A549 (cell line): ENCODE measurements at regions of chr1 and their contacts with region 1.

Region 1: DNA sequence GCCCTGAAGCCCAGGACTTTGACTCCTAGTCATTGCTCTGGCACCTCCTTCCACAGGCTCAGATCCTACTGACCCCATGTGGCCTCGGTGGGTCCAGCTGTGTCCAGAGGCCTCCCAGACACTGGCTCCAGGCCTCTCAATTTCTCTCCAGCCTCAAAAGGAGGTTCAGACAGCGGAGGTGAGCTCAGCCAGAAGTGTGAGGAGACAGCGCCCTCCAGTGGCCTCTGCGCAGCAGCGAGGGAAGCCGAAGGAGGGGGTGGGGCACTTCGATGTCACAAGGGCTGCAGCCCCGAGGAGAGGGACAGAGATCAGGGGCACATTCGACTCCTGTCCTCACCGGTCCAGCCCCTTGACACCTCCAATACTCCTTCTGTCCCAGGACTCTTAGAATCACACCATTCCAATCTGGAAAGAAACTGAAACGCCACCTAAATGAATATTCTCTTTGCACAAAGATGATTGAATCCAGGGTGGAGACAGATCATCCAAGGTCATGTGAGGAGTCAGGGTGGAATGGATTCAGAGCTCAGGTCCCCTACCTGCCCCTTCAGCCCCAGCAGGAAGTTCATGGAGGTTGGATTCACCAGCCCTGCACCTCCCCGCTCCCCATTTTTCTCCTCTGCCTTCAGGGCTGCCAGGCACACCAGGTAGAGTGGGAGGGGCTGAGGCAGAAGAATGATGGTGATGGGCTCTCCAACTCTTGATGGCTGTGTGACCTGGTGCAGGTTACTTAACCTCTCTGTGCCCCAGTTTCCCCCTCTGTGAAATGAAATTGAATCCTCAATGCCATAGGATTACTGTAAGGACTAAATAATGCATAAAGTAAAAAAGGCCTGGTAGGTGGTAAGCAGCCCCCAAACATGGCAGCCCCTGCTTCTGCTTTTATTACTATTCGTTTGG is 34.8 kb upstream of the ZBTB40 start:
- DNase-seq: peak; percentile 69 to 74
- ATAC-seq: peak; percentile 66 to 74; a peak in 5 of 6 replicates
- H3K4me3 ChIP-seq: no peak overlapping the region
- H3K27ac ChIP-seq: no peak overlapping the region
- H3K4me1 ChIP-seq: peaks cover 34% of the 10 kb centered on the region
- CTCF ChIP-seq: peak; percentile 83
- EP300 ChIP-seq: no peak
- POLR2A ChIP-seq: no peak
- RAD21 ChIP-seq: peak; percentile 94 to 95

Region 2: GRCh38 chr1:22098752-22099151 is 318.1 kb before region 1 on chr1:
- CTCF ChIA-PET with region 1: interaction called, 11 read pairs
- POLR2A ChIA-PET with region 1: no interaction called
- DNase-seq: no peak
- ATAC-seq: no peak
- H3K4me3 ChIP-seq: no peak overlapping the region
- H3K27ac ChIP-seq: no peak overlapping the region
- H3K4me1 ChIP-seq: no peaks in the 10 kb centered on the region
- CTCF ChIP-seq: no peak
- EP300 ChIP-seq: no peak
- POLR2A ChIP-seq: no peak
- RAD21 ChIP-seq: no peak

Region 3: GRCh38 chr1:22114083-22115012 is 302.5 kb before region 1 on chr1:
- CTCF ChIA-PET with region 1: interaction called, 20 read pairs
- POLR2A ChIA-PET with region 1: no interaction called
- DNase-seq: no peak
- ATAC-seq: no peak
- H3K4me3 ChIP-seq: no peak overlapping the region
- H3K27ac ChIP-seq: no peak overlapping the region
- H3K4me1 ChIP-seq: no peaks in the 10 kb centered on the region
- CTCF ChIP-seq: no peak
- EP300 ChIP-seq: no peak
- POLR2A ChIP-seq: no peak
- RAD21 ChIP-seq: no peak

Region 4: GRCh38 chr1:22131875-22132486 is 284.8 kb before region 1 on chr1:
- CTCF ChIA-PET with region 1: interaction called, 35 read pairs
- POLR2A ChIA-PET with region 1: no interaction called
- DNase-seq: peak; percentile 43 to 53
- ATAC-seq: peak; percentile 56 to 86; a peak in 4 of 6 replicates
- H3K4me3 ChIP-seq: no peak overlapping the region
- H3K27ac ChIP-seq: peak overlapping the region in 1 of 2 experiments; percentile 40; a peak in 1 of 6 replicates
- H3K4me1 ChIP-seq: peaks cover 13% of the 10 kb centered on the region
- CTCF ChIP-seq: peak; percentile 76
- EP300 ChIP-seq: no peak
- POLR2A ChIP-seq: no peak
- RAD21 ChIP-seq: peak; percentile 79 to 86

Region 5: DNA sequence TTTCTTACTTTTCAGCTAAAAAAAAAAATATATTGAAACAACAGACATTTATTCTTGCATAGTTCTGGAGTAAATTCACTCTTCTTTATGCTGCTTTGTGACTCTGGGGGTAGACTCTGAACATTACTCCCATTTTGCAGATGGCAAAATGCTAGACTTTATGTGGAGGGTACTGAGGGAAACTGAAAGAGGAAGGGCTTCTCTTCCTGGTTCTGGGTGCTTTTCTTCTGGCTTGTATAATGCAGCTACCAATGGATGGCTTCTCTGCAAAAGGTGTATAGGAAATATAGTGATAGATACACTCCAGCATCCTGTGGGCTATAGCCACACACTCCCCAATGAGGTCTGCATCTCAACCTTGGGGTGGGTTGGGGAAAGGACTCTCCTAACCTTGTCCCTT is 15.2 kb after region 1 on chr1:
- CTCF ChIA-PET with region 1: interaction called, 12 read pairs
- POLR2A ChIA-PET with region 1: no interaction called
- DNase-seq: no peak
- ATAC-seq: no peak
- H3K4me3 ChIP-seq: no peak overlapping the region
- H3K27ac ChIP-seq: no peak overlapping the region
- H3K4me1 ChIP-seq: no peaks in the 10 kb centered on the region
- CTCF ChIP-seq: no peak
- EP300 ChIP-seq: no peak
- POLR2A ChIP-seq: no peak
- RAD21 ChIP-seq: no peak

Region 6: DNA sequence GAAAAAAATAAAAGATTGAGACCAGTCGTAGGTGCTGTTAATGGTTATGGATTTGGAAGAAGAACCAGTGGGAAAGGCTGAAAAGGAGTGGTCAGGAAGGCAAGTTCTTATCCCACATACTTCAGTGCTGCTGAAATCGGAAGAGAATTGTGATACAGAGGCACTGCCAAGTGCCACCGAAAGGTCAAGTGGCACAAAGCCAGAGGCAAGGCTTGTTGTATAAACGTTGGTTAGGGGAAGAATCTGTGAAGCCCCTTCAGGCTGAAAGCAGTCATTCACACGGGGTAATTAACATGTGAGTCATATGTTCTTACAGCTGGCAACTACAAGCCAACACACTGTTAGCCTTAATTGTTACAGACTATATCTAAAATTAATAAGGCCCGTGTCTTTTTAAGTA is 83.7 kb after region 1 on chr1:
- CTCF ChIA-PET with region 1: no interaction called
- POLR2A ChIA-PET with region 1: no interaction called
- DNase-seq: no peak
- ATAC-seq: no peak
- H3K4me3 ChIP-seq: no peak overlapping the region
- H3K27ac ChIP-seq: no peak overlapping the region
- H3K4me1 ChIP-seq: no peaks in the 10 kb centered on the region
- CTCF ChIP-seq: no peak
- EP300 ChIP-seq: no peak
- POLR2A ChIP-seq: no peak
- RAD21 ChIP-seq: no peak

Region 7: DNA sequence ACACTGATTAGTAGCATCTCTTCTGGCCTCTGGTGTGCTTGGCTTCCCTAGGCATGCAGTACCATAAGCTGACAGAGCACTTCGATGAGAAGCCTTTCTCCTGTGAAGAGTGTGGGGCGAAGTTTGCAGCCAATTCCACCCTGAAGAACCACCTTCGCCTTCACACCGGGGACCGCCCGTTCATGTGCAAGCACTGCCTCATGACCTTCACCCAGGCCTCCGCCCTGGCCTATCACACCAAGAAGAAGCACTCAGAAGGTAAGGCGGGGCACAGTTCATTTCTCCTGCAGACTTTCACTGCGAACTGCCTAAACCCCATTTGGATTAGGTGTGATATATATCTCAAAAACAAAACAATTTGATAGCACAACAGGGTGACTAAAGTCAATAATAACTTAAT is 96.1 kb after region 1 on chr1:
- CTCF ChIA-PET with region 1: no interaction called
- POLR2A ChIA-PET with region 1: no interaction called
- DNase-seq: no peak
- ATAC-seq: no peak
- H3K4me3 ChIP-seq: no peak overlapping the region
- H3K27ac ChIP-seq: no peak overlapping the region
- H3K4me1 ChIP-seq: no peaks in the 10 kb centered on the region
- CTCF ChIP-seq: no peak
- EP300 ChIP-seq: no peak
- POLR2A ChIP-seq: no peak
- RAD21 ChIP-seq: no peak

Region 8: DNA sequence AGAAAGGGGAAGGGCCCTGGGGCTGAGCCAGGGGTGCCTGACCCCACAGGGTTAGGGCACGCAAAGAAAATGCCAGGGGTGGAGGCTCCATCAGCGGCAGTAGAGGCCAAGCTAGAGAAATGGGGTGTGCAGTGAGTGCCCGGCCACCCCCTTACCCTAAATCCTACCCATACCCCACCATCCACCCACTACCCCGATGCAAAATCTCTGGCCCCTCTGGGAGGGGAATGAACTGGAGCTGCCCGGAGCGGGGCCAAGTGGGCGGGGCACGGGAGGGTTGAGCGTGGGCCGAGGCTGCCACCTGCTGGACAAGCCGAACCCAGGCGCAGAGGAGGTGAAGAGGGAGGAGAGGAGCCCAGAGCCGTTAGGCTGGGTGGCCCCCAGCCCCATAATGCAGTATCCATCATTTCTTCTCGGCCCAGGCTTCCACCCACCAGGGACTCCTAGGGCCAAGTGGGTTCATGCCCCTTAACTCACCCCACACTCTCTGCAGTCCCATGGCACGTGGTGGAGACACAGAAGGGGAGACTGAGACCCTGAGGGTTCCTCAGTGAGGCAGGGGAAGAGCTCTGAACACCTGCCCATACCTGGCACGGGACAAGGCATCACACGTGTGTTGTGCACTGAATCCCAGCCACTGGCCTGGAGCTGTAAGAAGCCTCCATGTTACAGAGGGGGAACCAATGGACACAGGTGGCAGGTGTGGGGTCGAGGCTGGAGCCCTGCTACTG is 225.3 kb after region 1 on chr1:
- CTCF ChIA-PET with region 1: interaction called, 248 read pairs
- POLR2A ChIA-PET with region 1: interaction called, 4 read pairs
- DNase-seq: peak; percentile 19 to 66
- ATAC-seq: peak; percentile 75 to 93
- H3K4me3 ChIP-seq: no peak overlapping the region
- H3K27ac ChIP-seq: no peak overlapping the region
- H3K4me1 ChIP-seq: 0 out of 3 replicates have a peak, but pooled peaks cover 5% of the 10 kb centered on the region
- CTCF ChIP-seq: peak; percentile 78
- EP300 ChIP-seq: no peak
- POLR2A ChIP-seq: no peak
- RAD21 ChIP-seq: peak; percentile 87 to 94